ENCODE measurements at regions of chr6 and their contacts with region 1.

Region 1: GRCh38 chr6:89819336-89820130 is at the start of gene MDN1:
- DNase-seq: peak; percentile 60 to 89 (median 87)
- ATAC-seq: peak; percentile 96
- H3K4me3 ChIP-seq: peak within 1 kb of the TSS; percentile 66
- H3K4me3 Mint-ChIP-seq: peak within 1 kb of the TSS; percentile 92 to 97 (median 96)
- H3K27ac ChIP-seq: peak within 1 kb of the TSS; percentile 75
- H3K27ac Mint-ChIP-seq: peak within 1 kb of the TSS; percentile 92 to 98 (median 96)
- H3K4me1 ChIP-seq: peaks cover 12 to 19% of the 10 kb centered on the region in 2 donors
- H3K4me1 Mint-ChIP-seq: peaks cover 16 to 49% (median 36%) of the 10 kb centered on the region in 7 donors
- H3K27me3 ChIP-seq: no peaks in the 10 kb centered on the region
- H3K27me3 Mint-ChIP-seq: no peaks in the 10 kb centered on the region
- total RNA-seq, gene MDN1: 54.9 to 66.1 (median 63.0) TPM

Region 2: GRCh38 chr6:89145787-89146646 is 673.5 kb before region 1 on chr6 and contains the start of gene PM20D2:
- CTCF ChIA-PET with region 1: no interaction called
- POLR2A ChIA-PET with region 1: no interaction called
- intact Hi-C with region 1: loop called in 1 of 2 experiments (anchors 10 kb)
- DNase-seq: peak; percentile 45 to 78 (median 59)
- ATAC-seq: peak; percentile 84
- H3K4me3 ChIP-seq: peak within 1 kb of the TSS; percentile 58
- H3K4me3 Mint-ChIP-seq: peak within 1 kb of the TSS; percentile 86 to 99 (median 94)
- H3K27ac ChIP-seq: peak within 1 kb of the TSS; percentile 73
- H3K27ac Mint-ChIP-seq: peak within 1 kb of the TSS; percentile 84 to 98 (median 95)
- H3K4me1 ChIP-seq: peaks cover 5 to 10% of the 10 kb centered on the region in 2 donors
- H3K4me1 Mint-ChIP-seq: peaks cover 16 to 39% (median 23%) of the 10 kb centered on the region in 7 donors
- H3K27me3 ChIP-seq: no peaks in the 10 kb centered on the region
- H3K27me3 Mint-ChIP-seq: peaks cover 0 to 14% (median 0%) of the 10 kb centered on the region in 5 donors
- total RNA-seq, gene PM20D2: 4.6 to 12.7 (median 9.5) TPM

Region 3: GRCh38 chr6:89834884-89835792 is 15.6 kb after region 1 on chr6:
- CTCF ChIA-PET with region 1: no interaction called
- POLR2A ChIA-PET with region 1: interaction called, 13 read pairs
- intact Hi-C with region 1: loop called (anchors 2 kb)
- DNase-seq: peak in 3 of 9 donors; percentile 16 to 31 (median 25)
- ATAC-seq: peak; percentile 83
- H3K4me3 ChIP-seq: peak overlapping the region; percentile 2
- H3K4me3 Mint-ChIP-seq: peak overlapping the region; percentile 54 to 78 (median 69)
- H3K27ac ChIP-seq: peak overlapping the region; percentile 51
- H3K27ac Mint-ChIP-seq: peak overlapping the region; percentile 55 to 89 (median 87)
- H3K4me1 ChIP-seq: peaks cover 21 to 33% of the 10 kb centered on the region in 2 donors
- H3K4me1 Mint-ChIP-seq: peaks cover 33 to 77% (median 53%) of the 10 kb centered on the region in 7 donors
- H3K27me3 ChIP-seq: no peaks in the 10 kb centered on the region
- H3K27me3 Mint-ChIP-seq: no peaks in the 10 kb centered on the region

Region 4: GRCh38 chr6:90184334-90185298 is 365.1 kb after region 1 on chr6:
- CTCF ChIA-PET with region 1: no interaction called
- POLR2A ChIA-PET with region 1: no interaction called
- intact Hi-C with region 1: loop called in 1 of 2 experiments (anchors 5 kb)
- DNase-seq: peak in 2 of 9 donors; percentile 31 to 41
- ATAC-seq: no peak
- H3K4me3 ChIP-seq: peak overlapping the region; percentile 18
- H3K4me3 Mint-ChIP-seq: peak overlapping the region; percentile 1 to 81 (median 66)
- H3K27ac ChIP-seq: peak overlapping the region; percentile 50
- H3K27ac Mint-ChIP-seq: peak overlapping the region; percentile 47 to 97 (median 93)
- H3K4me1 ChIP-seq: peaks cover 0 to 63% of the 10 kb centered on the region in 2 donors
- H3K4me1 Mint-ChIP-seq: peaks cover 34 to 91% (median 79%) of the 10 kb centered on the region in 7 donors
- H3K27me3 ChIP-seq: no peaks in the 10 kb centered on the region
- H3K27me3 Mint-ChIP-seq: no peaks in the 10 kb centered on the region

Measured in naive thymus-derived CD4-positive, alpha-beta T cell (primary cell).